ENCODE measurements at regions of chr6 and their contacts with region 1.

Region 1: GRCh38 chr6:106979427-106979884 is 4.9 kb upstream of the CD24 start:
- DNase-seq: peak; percentile 58 to 84 (median 70)
- ATAC-seq: no peak
- H3K4me3 ChIP-seq: no peak overlapping the region
- H3K4me3 Mint-ChIP-seq: no peak overlapping the region
- H3K27ac ChIP-seq: no peak overlapping the region
- H3K27ac Mint-ChIP-seq: no peak overlapping the region
- H3K4me1 ChIP-seq: peaks cover 7% of the 10 kb centered on the region
- H3K4me1 Mint-ChIP-seq: peaks cover 6% of the 10 kb centered on the region
- H3K27me3 ChIP-seq: peaks cover 10 to 18% of the 10 kb centered on the region in 2 experiments
- H3K27me3 Mint-ChIP-seq: peaks cover 44% of the 10 kb centered on the region
- CTCF ChIP-seq: peak; percentile 90

Region 2: GRCh38 chr6:106339334-106340029 is 640.0 kb before region 1 on chr6:
- CTCF ChIA-PET with region 1: interaction called, 9 read pairs
- POLR2A ChIA-PET with region 1: no interaction called
- intact Hi-C with region 1: loop called (anchors 1 kb)
- DNase-seq: peak in 12 of 14 experiments; percentile 4 to 74 (median 32)
- ATAC-seq: peak; percentile 80
- H3K4me3 ChIP-seq: no peak overlapping the region
- H3K4me3 Mint-ChIP-seq: no peak overlapping the region
- H3K27ac ChIP-seq: no peak overlapping the region
- H3K27ac Mint-ChIP-seq: no peak overlapping the region
- H3K4me1 ChIP-seq: peaks cover 3% of the 10 kb centered on the region
- H3K4me1 Mint-ChIP-seq: no peaks in the 10 kb centered on the region
- H3K27me3 ChIP-seq: peaks cover 5 to 8% of the 10 kb centered on the region in 2 experiments
- H3K27me3 Mint-ChIP-seq: peaks cover 52% of the 10 kb centered on the region
- CTCF ChIP-seq: peak; percentile 73

Region 3: DNA sequence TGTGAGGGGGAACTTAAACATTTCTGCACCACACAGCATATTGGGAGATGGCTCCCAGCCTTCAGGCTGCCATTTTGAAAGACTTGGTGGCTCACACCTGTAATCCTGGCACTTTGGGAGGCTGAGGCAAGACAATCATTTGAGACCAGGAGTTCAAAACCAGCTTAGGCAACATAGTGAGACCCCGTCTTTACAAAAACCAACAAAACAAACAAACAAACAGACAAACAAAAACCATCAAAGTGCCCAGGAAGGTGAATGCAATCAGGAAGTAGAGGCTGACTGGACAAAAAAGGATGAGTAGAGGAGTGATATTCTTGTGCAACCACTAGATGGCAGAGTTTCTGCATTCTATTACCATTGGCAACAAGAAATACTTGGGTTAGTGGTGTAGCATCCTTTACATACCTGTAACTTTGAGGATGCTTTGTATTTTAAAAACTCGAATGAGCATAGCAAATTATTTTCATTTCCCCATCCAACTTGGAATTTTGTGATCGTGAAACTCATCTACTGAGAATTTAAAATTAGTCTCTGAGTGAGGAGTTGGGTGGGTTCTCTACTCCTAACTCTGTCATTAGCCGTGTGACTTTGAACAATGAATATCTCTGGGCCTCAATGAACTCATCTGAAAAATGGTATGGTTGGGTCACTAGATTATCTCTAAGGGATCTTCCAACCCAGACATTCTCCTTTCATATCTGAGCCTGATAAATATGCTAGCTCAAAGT is 534.5 kb before region 1 on chr6:
- CTCF ChIA-PET with region 1: interaction called, 8 read pairs
- POLR2A ChIA-PET with region 1: no interaction called
- intact Hi-C with region 1: loop called (anchors 1 kb)
- DNase-seq: peak in 4 of 14 experiments; percentile 49 to 83 (median 81)
- ATAC-seq: peak; percentile 88
- H3K4me3 ChIP-seq: no peak overlapping the region
- H3K4me3 Mint-ChIP-seq: no peak overlapping the region
- H3K27ac ChIP-seq: no peak overlapping the region
- H3K27ac Mint-ChIP-seq: no peak overlapping the region
- H3K4me1 ChIP-seq: peaks cover 9% of the 10 kb centered on the region
- H3K4me1 Mint-ChIP-seq: peaks cover 15% of the 10 kb centered on the region
- H3K27me3 ChIP-seq: peaks cover 4 to 23% of the 10 kb centered on the region in 2 experiments
- H3K27me3 Mint-ChIP-seq: peaks cover 30% of the 10 kb centered on the region
- CTCF ChIP-seq: peak; percentile 78

Region 4: DNA sequence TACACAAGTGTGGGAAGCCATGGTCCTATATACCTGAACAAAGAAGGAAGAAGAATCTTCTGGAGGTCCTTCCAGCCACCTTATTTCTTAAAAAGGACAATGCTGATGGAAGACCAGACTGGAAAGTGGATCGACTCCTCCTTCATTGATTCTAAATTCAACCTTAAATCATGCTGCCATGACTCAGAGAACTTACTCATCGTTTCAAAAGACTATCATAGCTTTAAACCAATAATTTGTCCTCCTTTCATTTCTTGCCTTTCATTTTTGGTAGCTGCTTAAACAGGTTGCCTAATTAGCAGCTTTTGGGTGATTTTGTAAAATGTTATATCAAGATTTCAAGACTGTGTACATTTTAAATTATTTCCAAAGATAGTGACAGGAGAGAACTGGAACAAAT is 410.9 kb before region 1 on chr6:
- CTCF ChIA-PET with region 1: interaction called, 7 read pairs
- POLR2A ChIA-PET with region 1: no interaction called
- intact Hi-C with region 1: loop called (anchors 5 kb)
- DNase-seq: no peak
- ATAC-seq: no peak
- H3K4me3 ChIP-seq: no peak overlapping the region
- H3K4me3 Mint-ChIP-seq: no peak overlapping the region
- H3K27ac ChIP-seq: no peak overlapping the region
- H3K27ac Mint-ChIP-seq: no peak overlapping the region
- H3K4me1 ChIP-seq: no peaks in the 10 kb centered on the region
- H3K4me1 Mint-ChIP-seq: peaks cover 5% of the 10 kb centered on the region
- H3K27me3 ChIP-seq: no peaks in the 10 kb centered on the region
- H3K27me3 Mint-ChIP-seq: no peaks in the 10 kb centered on the region
- CTCF ChIP-seq: no peak